PC-9 (cell line): ENCODE measurements at regions of chr12 and their contacts with region 1.

Region 1: GRCh38 chr12:45887544-45887943 is 102.8 kb downstream of the SCAF11 start:
- DNase-seq: no peak
- H3K4me3 ChIP-seq: no peak overlapping the region
- H3K27ac ChIP-seq: no peak overlapping the region
- H3K4me1 ChIP-seq: no peaks in the 10 kb centered on the region
- H3K27me3 ChIP-seq: no peaks in the 10 kb centered on the region
- CTCF ChIP-seq: no peak

Region 2: DNA sequence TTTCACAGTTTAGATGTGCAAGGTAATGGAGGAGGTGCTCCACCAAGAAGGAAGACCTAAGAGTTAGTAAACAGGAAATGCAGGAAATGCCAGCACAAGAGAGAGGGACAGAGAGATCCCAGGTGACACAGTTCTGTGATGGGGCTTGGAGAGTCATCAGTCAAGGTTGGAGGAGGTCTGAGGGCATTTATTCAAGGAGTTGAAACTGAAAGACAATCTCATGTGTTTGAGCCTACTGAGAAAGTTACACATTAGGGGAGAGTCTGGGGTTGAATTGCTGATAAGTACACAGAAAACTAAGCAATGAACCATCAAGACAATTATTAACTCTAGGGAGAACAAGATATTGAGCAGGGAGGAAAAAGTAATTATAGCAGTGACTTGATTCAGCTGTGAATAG is 533.1 kb before region 1 on chr12:
- CTCF ChIA-PET with region 1: no interaction called
- POLR2A ChIA-PET with region 1: interaction called, 10 read pairs
- intact Hi-C with region 1: no loop called
- DNase-seq: no peak
- H3K4me3 ChIP-seq: no peak overlapping the region
- H3K27ac ChIP-seq: no peak overlapping the region
- H3K4me1 ChIP-seq: peaks cover 8% of the 10 kb centered on the region
- H3K27me3 ChIP-seq: no peaks in the 10 kb centered on the region
- CTCF ChIP-seq: no peak

Region 3: DNA sequence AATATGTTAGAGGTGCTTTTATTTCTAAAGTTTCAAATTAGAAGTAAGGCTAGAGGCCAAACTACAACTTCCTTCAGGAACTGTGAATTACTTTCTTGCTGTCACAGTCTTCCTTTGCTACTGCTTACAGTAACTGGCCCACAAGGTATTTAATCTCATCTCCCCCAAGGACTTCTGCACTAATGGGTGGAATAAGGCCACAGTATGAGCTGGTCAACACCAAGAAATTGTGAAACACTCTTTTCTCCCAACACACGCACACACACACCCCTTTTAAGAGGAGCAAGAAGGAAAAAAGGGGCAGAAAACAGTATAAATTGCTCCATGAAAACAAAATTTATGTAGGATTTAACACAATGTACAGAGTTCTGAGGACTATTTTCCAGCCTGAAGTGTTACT is 57.2 kb after region 1 on chr12:
- CTCF ChIA-PET with region 1: no interaction called
- POLR2A ChIA-PET with region 1: no interaction called
- intact Hi-C with region 1: no loop called
- DNase-seq: no peak
- H3K4me3 ChIP-seq: no peak overlapping the region
- H3K27ac ChIP-seq: no peak overlapping the region
- H3K4me1 ChIP-seq: no peaks in the 10 kb centered on the region
- H3K27me3 ChIP-seq: no peaks in the 10 kb centered on the region
- CTCF ChIP-seq: no peak